ENCODE measurements at regions of chr16 and their contacts with region 1.

Region 1: GRCh38 chr16:31186176-31186575 is 6.2 kb downstream of the FUS start:
- DNase-seq: peak in 1 of 2 donors; percentile 41
- ATAC-seq: no peak
- H3K4me3 ChIP-seq: no peak overlapping the region
- H3K4me3 Mint-ChIP-seq: peak overlapping the region; percentile 91
- H3K27ac ChIP-seq: no peak overlapping the region
- H3K27ac Mint-ChIP-seq: peak overlapping the region; percentile 80 to 94
- H3K4me1 ChIP-seq: peaks cover 73% of the 10 kb centered on the region
- H3K4me1 Mint-ChIP-seq: peaks cover 97 to 99% of the 10 kb centered on the region in 2 donors
- H3K27me3 ChIP-seq: no peaks in the 10 kb centered on the region
- H3K27me3 Mint-ChIP-seq: no peaks in the 10 kb centered on the region
- CTCF ChIP-seq: no peak

Region 2: GRCh38 chr16:31157136-31157535 is 29.0 kb before region 1 on chr16:
- intact Hi-C with region 1: no loop called
- DNase-seq: no peak
- ATAC-seq: peak in 1 of 3 donors; percentile 48
- H3K4me3 ChIP-seq: no peak overlapping the region
- H3K4me3 Mint-ChIP-seq: peak overlapping the region; percentile 4
- H3K27ac ChIP-seq: no peak overlapping the region
- H3K27ac Mint-ChIP-seq: no peak overlapping the region
- H3K4me1 ChIP-seq: peaks cover 3% of the 10 kb centered on the region
- H3K4me1 Mint-ChIP-seq: peaks cover 0 to 6% of the 10 kb centered on the region in 2 donors
- H3K27me3 ChIP-seq: no peaks in the 10 kb centered on the region
- H3K27me3 Mint-ChIP-seq: no peaks in the 10 kb centered on the region
- CTCF ChIP-seq: no peak

Region 3: DNA sequence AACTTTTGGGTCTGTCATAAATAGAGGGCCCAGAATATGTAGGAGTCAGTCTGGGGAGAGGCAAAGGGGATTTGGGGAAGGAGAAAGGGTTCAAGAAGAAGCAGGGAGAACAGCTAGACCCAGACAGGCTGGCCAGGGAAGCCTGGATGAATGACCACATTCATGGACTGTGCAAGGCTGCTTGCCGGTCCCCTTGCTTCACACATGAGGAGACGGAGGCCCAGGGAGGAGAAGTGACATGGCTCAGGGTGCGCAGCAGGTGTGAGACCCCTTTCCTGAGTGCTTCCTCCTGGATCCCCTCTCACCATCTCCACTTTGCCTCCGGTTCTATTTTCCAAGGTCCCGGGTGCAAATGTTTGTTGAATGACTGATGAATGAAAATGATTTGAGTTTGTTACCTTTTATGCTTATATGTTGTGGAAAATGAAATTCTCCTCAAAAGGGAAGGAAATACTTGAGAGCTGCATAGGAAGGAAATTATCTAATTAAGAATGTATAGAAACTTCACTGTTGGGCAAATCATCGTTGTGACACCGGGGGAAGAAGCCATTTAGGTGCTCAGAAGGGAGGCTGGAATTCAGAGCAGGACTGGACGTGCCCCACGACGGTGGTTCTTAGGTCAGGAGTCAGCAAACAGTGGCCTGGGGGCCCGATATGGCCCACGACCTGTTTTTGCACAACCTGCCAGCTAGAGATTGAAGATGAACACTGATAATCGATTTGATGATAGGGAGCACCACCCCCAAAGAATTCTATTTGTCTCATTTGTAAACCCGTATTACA is 74.2 kb after region 1 on chr16:
- intact Hi-C with region 1: loop called (anchors 5 kb)
- DNase-seq: no peak
- ATAC-seq: peak in 1 of 3 donors; percentile 33
- H3K4me3 ChIP-seq: peak overlapping the region; percentile 64
- H3K4me3 Mint-ChIP-seq: peak overlapping the region; percentile 99
- H3K27ac ChIP-seq: peak overlapping the region; percentile 53
- H3K27ac Mint-ChIP-seq: peak overlapping the region; percentile 84 to 91
- H3K4me1 ChIP-seq: peaks cover 63% of the 10 kb centered on the region
- H3K4me1 Mint-ChIP-seq: peaks cover 42 to 52% of the 10 kb centered on the region in 2 donors
- H3K27me3 ChIP-seq: no peaks in the 10 kb centered on the region
- H3K27me3 Mint-ChIP-seq: no peaks in the 10 kb centered on the region
- CTCF ChIP-seq: no peak